Heart left ventricle (tissue), 16 donors: ENCODE measurements at regions of chr11 and their contacts with region 1.

Region 1: GRCh38 chr11:19628018-19628417 is 84.6 kb upstream of the NAV2 start:
- DNase-seq: peak; percentile 43 to 85 (median 64)
- ATAC-seq: peak; percentile 94 to 97 (median 96)
- H3K4me3 ChIP-seq: no peak overlapping the region
- H3K27ac ChIP-seq: peak overlapping the region; percentile 7 to 84 (median 57)
- H3K4me1 ChIP-seq: peaks cover 0 to 36% (median 23%) of the 10 kb centered on the region in 12 donors
- H3K27me3 ChIP-seq: no peaks in the 10 kb centered on the region
- CTCF ChIP-seq: no peak
- POLR2A ChIP-seq: no peak

Region 2: DNA sequence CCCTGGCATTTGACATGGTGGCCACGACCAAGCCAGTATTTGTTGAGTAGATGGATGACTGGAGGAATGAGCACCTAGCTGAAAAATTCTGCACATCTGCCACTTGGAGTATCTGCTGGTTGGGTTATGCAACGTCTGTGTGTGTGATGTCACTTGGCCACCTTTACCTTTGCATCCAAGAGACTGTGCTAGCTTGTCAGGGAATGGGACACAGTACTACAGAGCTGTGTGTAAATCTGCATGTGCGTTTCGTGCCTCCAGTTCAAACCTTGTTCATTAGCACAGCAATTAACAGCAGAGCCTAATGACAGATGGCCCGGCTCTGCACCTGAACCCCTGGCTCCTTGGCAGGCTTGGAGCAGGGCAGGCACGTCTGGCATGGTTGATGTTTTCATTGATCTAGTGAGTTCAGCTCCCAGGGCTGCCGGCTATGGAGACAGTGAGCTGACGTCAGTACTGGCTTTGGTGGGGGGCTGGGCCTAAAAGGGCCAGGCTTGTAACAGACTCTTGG is 103.8 kb before region 1 on chr11:
- intact Hi-C with region 1: no loop called
- DNase-seq: no peak
- ATAC-seq: peak in 1 of 4 donors; percentile 16
- H3K4me3 ChIP-seq: no peak overlapping the region
- H3K27ac ChIP-seq: no peak overlapping the region
- H3K4me1 ChIP-seq: no peaks in the 10 kb centered on the region
- H3K27me3 ChIP-seq: no peaks in the 10 kb centered on the region
- CTCF ChIP-seq: no peak
- POLR2A ChIP-seq: no peak

Region 3: GRCh38 chr11:19673924-19674729 is 46.1 kb after region 1 on chr11:
- intact Hi-C with region 1: loop called in 1 of 10 experiments (anchors 5 kb)
- DNase-seq: peak; percentile 73 to 90 (median 85)
- ATAC-seq: peak; percentile 85 to 91 (median 90)
- H3K4me3 ChIP-seq: no peak overlapping the region
- H3K27ac ChIP-seq: peak overlapping the region; percentile 73 to 93 (median 84)
- H3K4me1 ChIP-seq: peaks cover 0 to 69% (median 33%) of the 10 kb centered on the region in 12 donors
- H3K27me3 ChIP-seq: no peaks in the 10 kb centered on the region
- CTCF ChIP-seq: no peak
- POLR2A ChIP-seq: no peak